Sigmoid colon (tissue), 7 donors: ENCODE measurements at regions of chr2 and their contacts with region 1.

Region 1: DNA sequence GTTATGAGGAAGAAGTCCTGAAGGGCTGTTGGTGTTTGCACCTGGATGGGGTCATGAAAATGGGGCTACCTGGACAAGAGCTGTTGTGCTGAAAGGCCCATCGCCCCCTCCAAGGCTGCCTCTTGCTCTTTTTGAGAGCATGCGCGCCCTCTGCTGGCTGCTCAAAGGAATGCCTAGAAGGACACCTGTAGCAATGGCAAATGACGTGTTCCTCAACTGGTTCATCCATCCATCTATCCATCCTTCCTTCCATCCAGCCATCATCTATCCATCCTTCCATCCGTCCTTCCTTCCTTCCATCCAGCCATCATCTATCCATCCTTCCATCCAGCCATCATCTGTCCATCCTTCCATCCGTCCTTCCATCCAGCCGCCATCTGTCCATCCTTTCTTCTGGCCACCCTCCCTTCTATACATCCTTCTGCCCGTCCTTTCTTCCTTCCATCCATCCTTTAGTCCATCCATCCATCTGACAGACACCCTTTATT is 17.2 kb upstream of the RPL31 start:
- DNase-seq: peak; percentile 86
- H3K4me3 ChIP-seq: no peak overlapping the region
- H3K27ac ChIP-seq: no peak overlapping the region
- H3K4me1 ChIP-seq: no peaks in the 10 kb centered on the region
- H3K27me3 ChIP-seq: no peaks in the 10 kb centered on the region
- CTCF ChIP-seq: peak; percentile 86 to 97 (median 88)
- EP300 ChIP-seq: no peak
- POLR2A ChIP-seq: no peak

Region 2: DNA sequence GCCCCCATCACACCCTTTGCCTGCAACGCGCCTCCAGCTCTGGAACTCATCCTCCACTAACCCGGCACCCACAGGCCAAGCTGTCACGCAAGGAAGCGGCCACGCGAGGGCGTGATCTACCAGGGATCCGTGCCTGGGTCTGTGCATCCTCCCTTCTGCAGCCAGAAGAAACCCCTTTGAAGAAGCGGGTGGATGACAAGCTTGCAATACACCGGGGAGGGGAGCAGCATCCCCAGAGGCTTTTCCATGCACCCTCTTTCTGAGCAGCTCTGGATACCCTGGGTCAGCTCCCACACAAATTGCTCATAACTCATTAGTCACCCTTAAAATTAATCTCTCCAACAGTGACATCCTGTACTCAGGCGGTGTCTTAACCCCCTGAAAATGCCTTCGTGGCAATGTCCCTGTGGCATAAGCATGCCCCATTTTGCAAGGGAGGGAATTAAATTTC is 374.5 kb before region 1 on chr2:
- intact Hi-C with region 1: loop called (anchors 1 kb)
- DNase-seq: peak; percentile 80
- H3K4me3 ChIP-seq: no peak overlapping the region
- H3K27ac ChIP-seq: no peak overlapping the region
- H3K4me1 ChIP-seq: no peaks in the 10 kb centered on the region
- H3K27me3 ChIP-seq: no peaks in the 10 kb centered on the region
- CTCF ChIP-seq: peak; percentile 37 to 60 (median 43)
- EP300 ChIP-seq: no peak
- POLR2A ChIP-seq: no peak

Region 3: GRCh38 chr2:100730346-100730745 is 254.6 kb before region 1 on chr2:
- intact Hi-C with region 1: loop called (anchors 2 kb)
- DNase-seq: peak; percentile 76
- H3K4me3 ChIP-seq: no peak overlapping the region
- H3K27ac ChIP-seq: no peak overlapping the region
- H3K4me1 ChIP-seq: no peaks in the 10 kb centered on the region
- H3K27me3 ChIP-seq: no peaks in the 10 kb centered on the region
- CTCF ChIP-seq: peak in 3 of 4 experiments; percentile 52 to 67 (median 61)
- EP300 ChIP-seq: no peak
- POLR2A ChIP-seq: no peak

Region 4: GRCh38 chr2:101001691-101002561 is 17.0 kb after region 1 on chr2 and contains the start of gene RPL31:
- intact Hi-C with region 1: no loop called
- DNase-seq: peak; percentile 99
- H3K4me3 ChIP-seq: peak within 1 kb of the TSS; percentile 64 to 89 (median 82)
- H3K27ac ChIP-seq: peak within 1 kb of the TSS; percentile 82 to 92 (median 89)
- H3K4me1 ChIP-seq: peaks cover 0 to 36% (median 28%) of the 10 kb centered on the region in 4 donors
- H3K27me3 ChIP-seq: no peaks in the 10 kb centered on the region
- CTCF ChIP-seq: no peak
- EP300 ChIP-seq: peak in 1 of 4 donors; percentile 65
- POLR2A ChIP-seq: peak; percentile 87
- total RNA-seq, gene RPL31: 1,030 to 2,345 (median 1,749) TPM